ENCODE measurements at regions of chr20 and their contacts with region 1.

Region 1: DNA sequence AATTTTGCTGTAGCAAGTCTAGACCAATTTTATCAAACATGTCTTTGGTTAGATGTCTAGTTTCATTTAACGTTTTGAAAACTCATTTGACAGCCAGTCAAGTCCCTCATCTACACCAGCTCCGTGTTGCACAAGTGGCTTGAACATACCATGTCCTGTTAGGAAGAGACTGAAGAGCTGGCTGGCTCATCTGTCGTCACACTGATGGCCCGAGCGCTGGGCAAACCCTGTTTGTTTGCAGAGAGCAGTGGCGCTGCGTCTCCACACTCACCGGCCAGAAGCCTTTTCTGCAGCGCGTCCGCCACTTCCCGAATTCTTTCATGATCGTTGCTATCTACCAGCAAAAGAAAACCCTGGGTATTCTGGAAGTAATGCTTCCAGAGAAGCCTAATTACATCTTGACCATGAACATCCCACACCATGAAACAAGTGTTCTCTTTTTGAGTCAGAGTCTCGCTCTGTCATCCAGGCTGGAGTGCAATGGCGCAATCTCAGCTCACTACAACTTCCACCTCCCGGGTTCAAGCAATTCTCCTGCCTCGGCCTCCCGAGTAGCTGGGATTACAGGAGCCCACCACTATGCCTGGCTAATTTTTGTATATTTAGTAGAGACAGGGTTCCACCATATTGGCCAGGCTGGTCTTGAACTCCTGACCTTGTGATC is 10.7 kb upstream of the TCFL5 start:
- DNase-seq: no peak
- ATAC-seq: no peak
- H3K4me3 ChIP-seq: no peak overlapping the region
- H3K4me3 Mint-ChIP-seq: no peak overlapping the region
- H3K27ac ChIP-seq: no peak overlapping the region
- H3K27ac Mint-ChIP-seq: no peak overlapping the region
- H3K4me1 ChIP-seq: peaks cover 0 to 6% of the 10 kb centered on the region in 2 donors
- H3K4me1 Mint-ChIP-seq: peaks cover 7 to 36% (median 21%) of the 10 kb centered on the region in 7 donors
- H3K27me3 ChIP-seq: no peaks in the 10 kb centered on the region
- H3K27me3 Mint-ChIP-seq: peaks cover 0 to 9% (median 0%) of the 10 kb centered on the region in 5 donors

Region 2: DNA sequence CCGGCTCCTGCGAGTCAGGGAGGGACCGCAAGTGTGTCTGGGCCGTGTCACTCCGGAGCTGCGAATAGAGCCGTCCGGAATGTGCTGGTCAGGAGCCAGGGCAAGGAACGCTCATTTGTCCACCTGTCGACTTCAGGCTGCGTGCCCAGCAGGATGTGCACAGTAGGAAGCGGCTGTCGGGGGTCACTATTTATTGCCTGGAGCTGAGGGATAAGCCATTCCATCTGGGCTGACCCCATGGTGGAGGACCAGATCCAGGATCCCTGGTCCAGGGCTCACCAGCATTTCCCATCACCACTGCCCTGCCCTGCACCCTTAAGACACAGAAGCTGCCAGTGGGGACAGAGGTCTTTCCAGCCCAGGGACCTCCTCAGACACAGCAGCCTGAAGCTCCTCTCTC is 149.0 kb before region 1 on chr20:
- CTCF ChIA-PET with region 1: no interaction called
- POLR2A ChIA-PET with region 1: no interaction called
- intact Hi-C with region 1: no loop called
- DNase-seq: no peak
- ATAC-seq: no peak
- H3K4me3 ChIP-seq: no peak overlapping the region
- H3K4me3 Mint-ChIP-seq: no peak overlapping the region
- H3K27ac ChIP-seq: no peak overlapping the region
- H3K27ac Mint-ChIP-seq: peak overlapping the region in 1 of 9 donors; percentile 33
- H3K4me1 ChIP-seq: no peaks in the 10 kb centered on the region
- H3K4me1 Mint-ChIP-seq: peaks cover 0 to 13% (median 4%) of the 10 kb centered on the region in 7 donors
- H3K27me3 ChIP-seq: no peaks in the 10 kb centered on the region
- H3K27me3 Mint-ChIP-seq: peaks cover 0 to 50% (median 0%) of the 10 kb centered on the region in 5 donors

Region 3: GRCh38 chr20:62891111-62891510 is 18.8 kb after region 1 on chr20:
- CTCF ChIA-PET with region 1: interaction called, 3 read pairs
- POLR2A ChIA-PET with region 1: interaction called, 4 read pairs
- intact Hi-C with region 1: loop called in 1 of 2 experiments (anchors 1 kb)
- DNase-seq: peak in 7 of 9 donors; percentile 53 to 76 (median 69)
- ATAC-seq: peak; percentile 60
- H3K4me3 ChIP-seq: peak overlapping the region; percentile 21
- H3K4me3 Mint-ChIP-seq: peak overlapping the region; percentile 48 to 78 (median 66)
- H3K27ac ChIP-seq: peak overlapping the region; percentile 68
- H3K27ac Mint-ChIP-seq: peak overlapping the region; percentile 80 to 97 (median 92)
- H3K4me1 ChIP-seq: peaks cover 0 to 32% of the 10 kb centered on the region in 2 donors
- H3K4me1 Mint-ChIP-seq: peaks cover 14 to 54% (median 47%) of the 10 kb centered on the region in 7 donors
- H3K27me3 ChIP-seq: no peaks in the 10 kb centered on the region
- H3K27me3 Mint-ChIP-seq: no peaks in the 10 kb centered on the region

Region 4: DNA sequence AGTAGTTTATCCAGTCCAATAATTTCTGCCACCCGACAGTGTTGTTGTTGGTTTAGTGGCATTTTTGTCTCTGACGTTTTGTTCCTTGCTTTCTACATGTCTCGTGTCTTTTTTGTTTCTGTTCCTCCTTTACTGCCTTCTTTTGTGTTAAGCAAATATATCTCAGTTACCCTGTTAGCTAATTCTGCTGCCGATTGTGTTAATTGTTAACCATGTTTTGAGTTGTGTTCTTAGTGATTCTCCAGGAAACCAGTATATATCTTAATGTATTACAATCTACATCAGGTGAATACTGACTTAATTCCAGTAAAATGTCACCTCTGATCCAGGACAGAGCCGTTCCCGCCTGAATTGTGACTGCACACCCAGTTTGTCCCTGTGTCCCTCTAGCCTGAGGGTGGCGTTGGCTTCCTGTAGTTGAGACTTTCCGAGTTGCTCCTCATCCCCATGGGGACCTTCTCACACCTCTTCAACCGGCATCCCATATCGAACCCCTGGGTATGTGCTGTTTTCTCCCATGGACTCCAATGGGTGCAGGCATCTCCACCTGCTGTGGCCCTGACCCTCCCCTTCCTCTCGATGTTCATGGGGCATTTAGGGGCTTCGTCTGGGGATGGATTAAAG is 170.2 kb after region 1 on chr20:
- CTCF ChIA-PET with region 1: no interaction called
- POLR2A ChIA-PET with region 1: no interaction called
- intact Hi-C with region 1: no loop called
- DNase-seq: no peak
- ATAC-seq: no peak
- H3K4me3 ChIP-seq: no peak overlapping the region
- H3K4me3 Mint-ChIP-seq: no peak overlapping the region
- H3K27ac ChIP-seq: no peak overlapping the region
- H3K27ac Mint-ChIP-seq: peak overlapping the region in 2 of 9 donors; percentile 6 to 41
- H3K4me1 ChIP-seq: no peaks in the 10 kb centered on the region
- H3K4me1 Mint-ChIP-seq: peaks cover 0 to 1% (median 0%) of the 10 kb centered on the region in 7 donors
- H3K27me3 ChIP-seq: no peaks in the 10 kb centered on the region
- H3K27me3 Mint-ChIP-seq: peaks cover 20 to 38% (median 26%) of the 10 kb centered on the region in 5 donors

Measured in naive thymus-derived CD4-positive, alpha-beta T cell (primary cell).